CD4-positive, alpha-beta T cell (primary cell): ENCODE measurements at regions of chr19 and their contacts with region 1.

Region 1: GRCh38 chr19:46487802-46488445 is 7.7 kb downstream of the PNMA8B start:
- DNase-seq: peak; percentile 47 to 85 (median 74)
- ATAC-seq: peak; percentile 83
- H3K4me3 ChIP-seq: no peak overlapping the region
- H3K4me3 Mint-ChIP-seq: no peak overlapping the region
- H3K27ac ChIP-seq: no peak overlapping the region
- H3K27ac Mint-ChIP-seq: no peak overlapping the region
- H3K4me1 ChIP-seq: peaks cover 34% of the 10 kb centered on the region
- H3K4me1 Mint-ChIP-seq: peaks cover 34% of the 10 kb centered on the region
- H3K27me3 ChIP-seq: peaks cover 59 to 60% of the 10 kb centered on the region in 2 experiments
- H3K27me3 Mint-ChIP-seq: peaks cover 92% of the 10 kb centered on the region
- CTCF ChIP-seq: peak; percentile 82

Region 2: DNA sequence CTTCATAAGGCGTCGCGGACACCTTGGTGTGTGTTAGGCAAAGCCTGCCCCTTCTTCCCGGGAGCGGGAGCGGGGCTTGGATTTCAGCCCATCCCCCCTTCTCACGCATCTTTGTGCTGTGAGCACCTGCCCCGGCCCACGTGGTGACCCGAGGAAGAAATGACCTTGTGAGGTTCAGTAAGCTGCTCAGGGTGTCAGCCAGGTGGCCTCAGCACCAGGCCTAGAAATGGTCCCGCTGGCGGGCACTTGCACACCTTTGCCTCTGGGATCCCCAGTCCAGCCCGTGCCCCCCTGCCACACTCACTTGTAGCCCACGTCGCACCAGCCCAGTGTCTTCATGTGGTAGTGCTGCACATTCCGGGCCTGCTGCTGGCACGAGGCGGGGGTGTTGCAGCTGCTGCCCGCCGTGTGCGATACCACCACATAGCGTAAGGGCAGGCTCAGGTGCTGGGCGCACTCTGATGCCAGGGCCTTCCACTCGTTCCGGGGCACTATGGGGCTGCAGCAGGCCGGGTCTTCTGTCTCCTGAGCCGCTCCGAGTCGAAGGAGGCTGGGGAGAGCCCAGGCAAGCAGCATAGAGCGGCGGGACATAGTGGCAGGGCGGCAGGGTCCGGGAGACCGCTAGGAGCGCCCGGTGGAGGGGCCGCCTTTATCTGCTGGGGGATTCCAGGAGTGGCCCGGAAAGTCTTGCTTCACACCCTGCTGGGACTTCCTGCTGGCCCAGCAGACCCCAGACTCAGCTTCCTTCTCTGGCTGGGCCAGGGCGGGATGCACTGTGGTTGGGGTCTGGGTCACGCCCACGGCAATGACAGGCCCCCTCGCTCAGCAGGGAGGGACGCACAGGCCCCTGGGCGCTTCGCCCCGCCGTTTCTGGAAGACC is 465.3 kb before region 1 on chr19 and contains the start of gene PGLYRP1:
- CTCF ChIA-PET with region 1: no interaction called
- POLR2A ChIA-PET with region 1: no interaction called
- intact Hi-C with region 1: loop called in 1 of 2 experiments (anchors 5 kb)
- DNase-seq: no peak
- ATAC-seq: no peak
- H3K4me3 ChIP-seq: no peak within 1 kb of the TSS
- H3K4me3 Mint-ChIP-seq: peak within 1 kb of the TSS; percentile 45
- H3K27ac ChIP-seq: no peak within 1 kb of the TSS
- H3K27ac Mint-ChIP-seq: no peak within 1 kb of the TSS
- H3K4me1 ChIP-seq: peaks cover 10% of the 10 kb centered on the region
- H3K4me1 Mint-ChIP-seq: peaks cover 18% of the 10 kb centered on the region
- H3K27me3 ChIP-seq: peaks cover 6 to 15% of the 10 kb centered on the region in 2 experiments
- H3K27me3 Mint-ChIP-seq: peaks cover 32% of the 10 kb centered on the region
- CTCF ChIP-seq: no peak
- total RNA-seq, gene PGLYRP1: not detected

Region 3: DNA sequence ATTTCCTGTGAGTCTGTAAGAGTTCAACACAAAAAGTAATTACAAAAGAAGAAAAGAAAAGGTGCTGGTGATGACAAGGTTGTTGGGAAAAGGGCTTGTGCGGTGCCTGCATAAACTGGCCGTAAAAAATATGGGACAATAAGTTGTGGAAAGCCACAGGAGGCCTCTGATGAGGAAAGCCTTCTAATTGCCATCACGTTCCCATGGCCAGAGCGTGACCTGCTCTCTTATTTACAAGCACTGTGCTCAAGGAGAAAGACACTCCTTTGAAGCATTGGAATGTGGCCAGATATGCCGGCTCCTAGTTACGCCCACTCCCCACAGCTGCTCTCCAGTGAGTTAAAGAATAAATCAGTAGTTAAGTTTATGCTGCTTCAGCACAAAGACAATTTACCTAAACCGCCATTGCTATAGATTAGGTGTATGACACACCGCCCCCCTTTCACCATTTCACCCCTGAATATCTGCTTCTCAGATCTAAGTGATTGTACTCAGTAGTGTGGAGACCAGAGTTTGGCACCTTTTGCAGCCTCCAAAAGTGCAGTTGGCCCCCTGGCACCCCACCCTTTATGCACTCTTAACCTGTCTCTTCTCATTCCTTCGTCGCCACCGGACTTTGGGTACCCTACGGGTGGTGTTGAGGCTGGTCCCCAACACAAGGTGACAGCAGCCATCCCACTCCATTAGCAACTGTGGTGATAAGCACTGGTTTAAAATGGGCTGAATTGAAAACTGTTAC is 456.9 kb before region 1 on chr19:
- CTCF ChIA-PET with region 1: interaction called, 4 read pairs
- POLR2A ChIA-PET with region 1: no interaction called
- intact Hi-C with region 1: loop called (anchors 2 to 5 kb)
- DNase-seq: no peak
- ATAC-seq: no peak
- H3K4me3 ChIP-seq: no peak overlapping the region
- H3K4me3 Mint-ChIP-seq: no peak overlapping the region
- H3K27ac ChIP-seq: no peak overlapping the region
- H3K27ac Mint-ChIP-seq: no peak overlapping the region
- H3K4me1 ChIP-seq: peaks cover 13% of the 10 kb centered on the region
- H3K4me1 Mint-ChIP-seq: peaks cover 14% of the 10 kb centered on the region
- H3K27me3 ChIP-seq: peaks cover 0 to 6% of the 10 kb centered on the region in 2 experiments
- H3K27me3 Mint-ChIP-seq: peaks cover 22% of the 10 kb centered on the region
- CTCF ChIP-seq: no peak

Region 4: GRCh38 chr19:46283771-46284170 is 204.2 kb before region 1 on chr19:
- CTCF ChIA-PET with region 1: interaction called, 9 read pairs
- POLR2A ChIA-PET with region 1: no interaction called
- intact Hi-C with region 1: loop called (anchors 1 kb)
- DNase-seq: no peak
- ATAC-seq: no peak
- H3K4me3 ChIP-seq: no peak overlapping the region
- H3K4me3 Mint-ChIP-seq: no peak overlapping the region
- H3K27ac ChIP-seq: no peak overlapping the region
- H3K27ac Mint-ChIP-seq: no peak overlapping the region
- H3K4me1 ChIP-seq: no peaks in the 10 kb centered on the region
- H3K4me1 Mint-ChIP-seq: no peaks in the 10 kb centered on the region
- H3K27me3 ChIP-seq: peaks cover 0 to 5% of the 10 kb centered on the region in 2 experiments
- H3K27me3 Mint-ChIP-seq: peaks cover 19% of the 10 kb centered on the region
- CTCF ChIP-seq: no peak

Region 5: GRCh38 chr19:46392243-46392801 is 95.6 kb before region 1 on chr19:
- CTCF ChIA-PET with region 1: interaction called, 7 read pairs
- POLR2A ChIA-PET with region 1: interaction called, 3 read pairs
- intact Hi-C with region 1: loop called (anchors 1 to 2 kb)
- DNase-seq: no peak
- ATAC-seq: no peak
- H3K4me3 ChIP-seq: no peak overlapping the region
- H3K4me3 Mint-ChIP-seq: no peak overlapping the region
- H3K27ac ChIP-seq: no peak overlapping the region
- H3K27ac Mint-ChIP-seq: no peak overlapping the region
- H3K4me1 ChIP-seq: peaks cover 3% of the 10 kb centered on the region
- H3K4me1 Mint-ChIP-seq: peaks cover 20% of the 10 kb centered on the region
- H3K27me3 ChIP-seq: no peaks in the 10 kb centered on the region
- H3K27me3 Mint-ChIP-seq: no peaks in the 10 kb centered on the region
- CTCF ChIP-seq: no peak

Region 6: GRCh38 chr19:46402725-46403124 is 85.2 kb before region 1 on chr19:
- CTCF ChIA-PET with region 1: interaction called, 9 read pairs
- POLR2A ChIA-PET with region 1: no interaction called
- intact Hi-C with region 1: loop called (anchors 1 kb)
- DNase-seq: no peak
- ATAC-seq: no peak
- H3K4me3 ChIP-seq: no peak overlapping the region
- H3K4me3 Mint-ChIP-seq: no peak overlapping the region
- H3K27ac ChIP-seq: no peak overlapping the region
- H3K27ac Mint-ChIP-seq: no peak overlapping the region
- H3K4me1 ChIP-seq: peaks cover 20% of the 10 kb centered on the region
- H3K4me1 Mint-ChIP-seq: peaks cover 18% of the 10 kb centered on the region
- H3K27me3 ChIP-seq: peaks cover 48 to 57% of the 10 kb centered on the region in 2 experiments
- H3K27me3 Mint-ChIP-seq: peaks cover 74% of the 10 kb centered on the region
- CTCF ChIP-seq: no peak

Region 7: GRCh38 chr19:46471116-46471733 is 16.7 kb before region 1 on chr19 and contains the start of gene PNMA8A:
- CTCF ChIA-PET with region 1: no interaction called
- POLR2A ChIA-PET with region 1: no interaction called
- intact Hi-C with region 1: no loop called
- DNase-seq: peak in 1 of 14 experiments; percentile 5
- ATAC-seq: no peak
- H3K4me3 ChIP-seq: peak within 1 kb of the TSS; percentile 14
- H3K4me3 Mint-ChIP-seq: no peak within 1 kb of the TSS
- H3K27ac ChIP-seq: no peak within 1 kb of the TSS
- H3K27ac Mint-ChIP-seq: no peak within 1 kb of the TSS
- H3K4me1 ChIP-seq: peaks cover 7% of the 10 kb centered on the region
- H3K4me1 Mint-ChIP-seq: peaks cover 6% of the 10 kb centered on the region
- H3K27me3 ChIP-seq: peaks cover 48 to 55% of the 10 kb centered on the region in 2 experiments
- H3K27me3 Mint-ChIP-seq: peaks cover 59% of the 10 kb centered on the region
- CTCF ChIP-seq: no peak
- total RNA-seq, gene PNMA8A: not detected